ENCODE measurements at regions of chr2 and their contacts with region 1.

Region 1: GRCh38 chr2:168136392-168136977 is 110.9 kb downstream of the STK39 start:
- DNase-seq: no peak
- ATAC-seq: peak; percentile 57
- H3K4me3 Mint-ChIP-seq: no peak overlapping the region
- H3K27ac Mint-ChIP-seq: no peak overlapping the region
- H3K4me1 Mint-ChIP-seq: peaks cover 24% of the 10 kb centered on the region
- H3K27me3 Mint-ChIP-seq: no peaks in the 10 kb centered on the region
- CTCF ChIP-seq: peak; percentile 26

Region 2: GRCh38 chr2:168210895-168211570 is 74.5 kb after region 1 on chr2:
- CTCF ChIA-PET with region 1: no interaction called
- POLR2A ChIA-PET with region 1: no interaction called
- intact Hi-C with region 1: loop called (anchors 2 kb)
- DNase-seq: no peak
- ATAC-seq: peak; percentile 65
- H3K4me3 Mint-ChIP-seq: peak overlapping the region; percentile 60
- H3K27ac Mint-ChIP-seq: peak overlapping the region; percentile 87
- H3K4me1 Mint-ChIP-seq: peaks cover 55% of the 10 kb centered on the region
- H3K27me3 Mint-ChIP-seq: no peaks in the 10 kb centered on the region
- CTCF ChIP-seq: no peak

Region 3: DNA sequence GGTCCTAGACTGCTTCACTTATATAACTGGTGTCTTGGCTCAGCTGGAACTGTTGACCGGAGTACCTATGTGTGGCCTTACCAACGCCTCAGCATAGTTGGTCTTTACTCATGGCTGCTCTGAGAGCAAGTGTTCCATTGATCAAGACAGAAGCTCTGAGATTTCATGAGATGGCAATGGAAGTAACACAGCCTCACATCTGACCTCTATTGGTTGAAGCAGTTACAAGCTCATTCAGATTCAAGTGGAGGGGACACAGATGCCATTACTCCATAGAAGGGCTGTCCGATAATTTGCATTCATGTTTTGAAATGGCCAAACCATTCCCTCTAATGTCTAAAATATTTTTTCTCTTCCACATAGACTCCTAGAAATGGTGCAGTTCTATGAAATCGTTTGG is 157.3 kb after region 1 on chr2:
- CTCF ChIA-PET with region 1: interaction called, 4 read pairs
- POLR2A ChIA-PET with region 1: no interaction called
- intact Hi-C with region 1: loop called (anchors 1 kb)
- DNase-seq: no peak
- ATAC-seq: no peak
- H3K4me3 Mint-ChIP-seq: no peak overlapping the region
- H3K27ac Mint-ChIP-seq: no peak overlapping the region
- H3K4me1 Mint-ChIP-seq: no peaks in the 10 kb centered on the region
- H3K27me3 Mint-ChIP-seq: no peaks in the 10 kb centered on the region
- CTCF ChIP-seq: no peak

Region 4: GRCh38 chr2:168687314-168687713 is 550.8 kb after region 1 on chr2:
- CTCF ChIA-PET with region 1: interaction called, 5 read pairs
- POLR2A ChIA-PET with region 1: no interaction called
- intact Hi-C with region 1: loop called (anchors 1 kb)
- DNase-seq: no peak
- ATAC-seq: no peak
- H3K4me3 Mint-ChIP-seq: no peak overlapping the region
- H3K27ac Mint-ChIP-seq: no peak overlapping the region
- H3K4me1 Mint-ChIP-seq: no peaks in the 10 kb centered on the region
- H3K27me3 Mint-ChIP-seq: no peaks in the 10 kb centered on the region
- CTCF ChIP-seq: no peak

Region 5: GRCh38 chr2:168920504-168921157 is 784.1 kb after region 1 on chr2:
- CTCF ChIA-PET with region 1: no interaction called
- POLR2A ChIA-PET with region 1: no interaction called
- intact Hi-C with region 1: loop called (anchors 2 kb)
- DNase-seq: no peak
- ATAC-seq: no peak
- H3K4me3 Mint-ChIP-seq: no peak overlapping the region
- H3K27ac Mint-ChIP-seq: no peak overlapping the region
- H3K4me1 Mint-ChIP-seq: no peaks in the 10 kb centered on the region
- H3K27me3 Mint-ChIP-seq: peaks cover 10% of the 10 kb centered on the region
- CTCF ChIP-seq: peak; percentile 50

Measured in activated B cell treated with CpG ODN at 0.5 μM for 24 hours (primary cell).